H1 (cell line): ENCODE measurements at regions of chr7 and their contacts with region 1.

Region 1: GRCh38 chr7:43758029-43758821 is at the start of gene BLVRA:
- DNase-seq: peak in 1 of 2 experiments; percentile 85
- H3K4me3 ChIP-seq: peak within 1 kb of the TSS; percentile 51 to 92 (median 70)
- H3K27ac ChIP-seq: no peak within 1 kb of the TSS
- H3K4me1 ChIP-seq: peaks cover 0 to 5% (median 3%) of the 10 kb centered on the region in 4 experiments; a peak in 4 of 7 replicates
- H3K27me3 ChIP-seq: peaks cover 0 to 10% (median 8%) of the 10 kb centered on the region in 4 experiments; a peak in 4 of 7 replicates
- CTCF ChIP-seq: no peak
- EP300 ChIP-seq: no peak
- POLR2A ChIP-seq: no peak
- RAD21 ChIP-seq: no peak
- total RNA-seq, gene BLVRA: 32.9 and 37.1 TPM in 2 replicates

Region 2: GRCh38 chr7:43729214-43729923 is 28.9 kb before region 1 on chr7 and contains the start of gene COA1:
- CTCF ChIA-PET with region 1: interaction called, 4 read pairs
- POLR2A ChIA-PET with region 1: interaction called, 12 read pairs
- DNase-seq: peak; percentile 49 to 76
- H3K4me3 ChIP-seq: peak within 1 kb of the TSS; percentile 87 to 96 (median 93)
- H3K27ac ChIP-seq: peak within 1 kb of the TSS; percentile 73; the same call in 1 of the 2 replicates
- H3K4me1 ChIP-seq: no peaks in the 10 kb centered on the region
- H3K27me3 ChIP-seq: no peaks in the 10 kb centered on the region
- CTCF ChIP-seq: no peak
- EP300 ChIP-seq: no peak
- POLR2A ChIP-seq: peak; percentile 72 to 96
- RAD21 ChIP-seq: 0 out of 4 replicates have a peak, but pooled peaks of 1 of the 2 experiments have one; percentile 12
- total RNA-seq, gene COA1: 136 and 143 TPM in 2 replicates

Region 3: DNA sequence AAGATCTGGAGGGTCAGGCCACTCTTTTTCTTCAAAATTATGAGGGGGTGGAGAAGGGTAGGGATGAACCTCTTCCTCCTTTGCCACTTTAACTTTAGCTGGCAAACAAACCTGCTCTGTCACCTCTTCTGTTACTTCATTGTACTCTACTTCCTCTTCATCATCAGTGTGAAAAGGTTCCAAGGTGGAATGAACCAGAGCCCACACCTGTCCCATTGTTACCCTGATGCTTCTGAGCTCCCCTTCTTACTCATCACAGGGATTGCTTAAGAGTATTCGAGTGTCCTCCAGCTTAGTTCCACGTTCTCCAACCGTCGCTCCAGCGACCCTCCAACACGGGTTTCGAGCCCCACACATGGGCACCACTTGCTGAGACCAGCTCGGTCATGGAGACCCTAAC is 105.9 kb after region 1 on chr7:
- CTCF ChIA-PET with region 1: no interaction called
- POLR2A ChIA-PET with region 1: no interaction called
- DNase-seq: no peak
- H3K4me3 ChIP-seq: no peak overlapping the region
- H3K27ac ChIP-seq: no peak overlapping the region
- H3K4me1 ChIP-seq: peaks cover 0 to 2% (median 0%) of the 10 kb centered on the region in 4 experiments; a peak in 2 of 7 replicates
- H3K27me3 ChIP-seq: no peaks in the 10 kb centered on the region
- CTCF ChIP-seq: no peak
- EP300 ChIP-seq: no peak
- POLR2A ChIP-seq: no peak
- RAD21 ChIP-seq: no peak

Region 4: DNA sequence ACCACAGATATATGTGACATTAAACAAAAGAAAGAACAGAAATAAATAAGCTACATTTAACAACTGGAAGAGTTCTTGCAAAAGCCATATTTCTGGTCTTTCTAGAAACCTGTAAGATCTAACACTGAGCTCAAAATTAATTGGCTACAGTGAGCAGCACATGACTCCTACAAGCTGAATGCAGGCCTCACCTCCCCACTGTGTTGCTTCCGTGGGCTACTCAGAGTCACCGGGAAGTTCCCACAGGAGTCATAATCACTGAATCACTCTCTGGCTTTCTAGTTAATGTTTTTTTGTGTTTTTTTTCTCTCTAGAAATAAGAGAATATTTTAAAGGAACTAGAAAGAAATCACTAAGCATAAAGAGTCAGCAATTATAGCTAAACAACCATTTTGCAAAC is 121.3 kb after region 1 on chr7:
- CTCF ChIA-PET with region 1: no interaction called
- POLR2A ChIA-PET with region 1: no interaction called
- DNase-seq: no peak
- H3K4me3 ChIP-seq: no peak overlapping the region
- H3K27ac ChIP-seq: no peak overlapping the region
- H3K4me1 ChIP-seq: peaks cover 1 to 4% (median 2%) of the 10 kb centered on the region in 4 experiments; a peak in 3 of 7 replicates
- H3K27me3 ChIP-seq: no peaks in the 10 kb centered on the region
- CTCF ChIP-seq: no peak
- EP300 ChIP-seq: no peak
- POLR2A ChIP-seq: no peak
- RAD21 ChIP-seq: no peak